Prostate gland (tissue), 2 donors: ENCODE measurements at regions of chr6 and their contacts with region 1.

Region 1: DNA sequence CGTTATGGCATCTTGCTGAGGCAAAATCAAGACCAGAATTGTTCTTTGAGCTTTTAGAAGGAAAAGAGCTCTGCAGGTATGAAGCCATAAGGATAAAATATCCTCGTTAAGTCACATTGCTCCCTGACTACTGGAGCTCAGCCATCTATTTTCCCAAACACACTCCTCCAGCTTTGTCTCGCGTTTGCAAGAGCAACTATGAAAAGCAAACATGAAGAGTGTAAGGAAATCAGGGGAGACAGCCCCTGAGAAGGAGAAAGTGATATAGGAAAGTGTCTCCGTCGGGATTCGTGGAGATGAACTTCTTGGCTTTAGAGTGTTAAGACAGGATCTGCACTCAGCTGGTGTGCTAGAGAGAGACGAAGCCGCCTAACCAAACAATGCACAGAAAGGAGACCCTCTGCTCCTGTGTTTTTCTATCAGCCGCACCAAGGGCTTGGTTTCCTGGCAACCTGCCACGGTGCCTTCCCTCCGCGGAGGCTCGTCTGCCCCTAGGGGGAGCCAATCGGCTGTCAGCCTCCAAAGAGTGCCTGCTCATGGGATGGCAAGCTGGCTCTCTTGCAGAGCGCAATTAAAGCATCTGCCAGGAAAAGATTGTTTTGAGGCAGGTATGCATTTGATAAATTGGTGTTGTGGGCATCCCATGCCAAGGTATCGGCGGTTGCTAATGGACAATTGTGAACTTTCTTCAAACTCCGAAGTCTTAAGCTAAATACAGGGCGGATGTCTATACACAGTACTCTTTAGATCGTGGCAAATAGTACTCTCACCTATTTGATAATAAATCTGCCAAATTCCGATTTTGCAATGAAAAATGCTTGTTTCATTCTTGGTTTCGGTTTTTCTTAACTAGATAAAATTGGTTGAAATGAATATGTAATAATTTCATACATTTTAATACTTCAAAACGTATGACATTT is 603.2 kb downstream of the RNF144B start:
- DNase-seq: peak; percentile 54
- H3K4me3 ChIP-seq: no peak overlapping the region
- H3K27ac ChIP-seq: no peak overlapping the region
- H3K4me1 ChIP-seq: no peaks in the 10 kb centered on the region
- H3K27me3 ChIP-seq: no peaks in the 10 kb centered on the region
- CTCF ChIP-seq: peak in 3 of 4 experiments; percentile 29 to 60 (median 36)
- POLR2A ChIP-seq: no peak

Region 2: DNA sequence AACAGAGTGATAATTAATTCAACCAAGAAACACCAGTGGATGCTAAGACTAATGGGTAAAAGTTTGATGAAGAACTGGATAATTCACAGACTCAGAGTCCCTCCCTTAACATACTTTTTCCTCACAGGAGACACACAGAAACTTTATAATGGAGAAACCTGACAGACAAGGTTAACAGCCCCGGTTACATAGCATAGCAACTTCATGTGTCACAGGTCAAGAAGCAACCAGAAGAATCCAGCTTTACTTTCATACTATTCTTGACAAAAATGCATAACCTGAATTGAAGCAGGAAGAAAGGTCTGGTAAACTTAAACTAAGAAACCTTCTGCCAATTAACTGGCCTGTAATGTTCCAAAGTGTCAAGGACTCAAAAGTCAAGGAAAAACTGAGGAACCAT is 227.2 kb before region 1 on chr6:
- intact Hi-C with region 1: no loop called
- DNase-seq: no peak
- H3K4me3 ChIP-seq: no peak overlapping the region
- H3K27ac ChIP-seq: no peak overlapping the region
- H3K4me1 ChIP-seq: no peaks in the 10 kb centered on the region
- H3K27me3 ChIP-seq: no peaks in the 10 kb centered on the region
- CTCF ChIP-seq: no peak
- POLR2A ChIP-seq: no peak

Region 3: DNA sequence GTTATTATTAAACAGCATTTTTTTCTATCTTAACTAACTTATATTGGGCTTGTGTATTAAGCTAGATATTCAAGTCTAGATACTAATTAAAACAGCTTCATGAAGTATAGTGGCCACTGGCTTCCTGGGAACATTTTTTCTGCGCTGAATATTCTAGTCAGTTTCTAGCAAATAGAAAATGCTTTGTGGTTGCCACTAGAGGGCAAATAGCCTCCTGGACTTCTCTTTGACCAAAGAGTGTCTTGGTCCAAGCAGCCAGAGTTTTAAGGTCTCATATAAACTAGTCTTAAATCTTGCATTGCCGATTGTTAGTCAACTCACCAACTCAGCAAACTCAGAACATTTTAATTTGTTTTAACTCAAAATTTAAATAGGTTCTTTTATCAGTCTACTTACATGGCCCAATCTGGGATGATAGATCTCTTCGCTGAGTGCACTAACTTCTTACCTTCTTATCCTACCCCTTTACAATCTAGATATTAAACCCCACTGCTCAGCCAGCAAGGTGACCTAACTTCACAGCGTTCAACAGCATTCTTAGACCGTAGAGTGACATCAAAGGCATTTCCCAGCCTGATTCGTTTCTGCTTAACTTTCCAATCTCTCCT is 822.3 kb after region 1 on chr6:
- intact Hi-C with region 1: loop called (anchors 10 kb)
- DNase-seq: no peak
- H3K4me3 ChIP-seq: no peak overlapping the region
- H3K27ac ChIP-seq: no peak overlapping the region
- H3K4me1 ChIP-seq: no peaks in the 10 kb centered on the region
- H3K27me3 ChIP-seq: no peaks in the 10 kb centered on the region
- CTCF ChIP-seq: peak in 3 of 4 experiments; percentile 52 to 59 (median 53)
- POLR2A ChIP-seq: no peak

Region 4: GRCh38 chr6:19845266-19846041 is 855.1 kb after region 1 on chr6:
- intact Hi-C with region 1: loop called (anchors 10 kb)
- DNase-seq: no peak
- H3K4me3 ChIP-seq: no peak overlapping the region
- H3K27ac ChIP-seq: no peak overlapping the region
- H3K4me1 ChIP-seq: no peaks in the 10 kb centered on the region
- H3K27me3 ChIP-seq: no peaks in the 10 kb centered on the region
- CTCF ChIP-seq: no peak
- POLR2A ChIP-seq: no peak

Region 5: DNA sequence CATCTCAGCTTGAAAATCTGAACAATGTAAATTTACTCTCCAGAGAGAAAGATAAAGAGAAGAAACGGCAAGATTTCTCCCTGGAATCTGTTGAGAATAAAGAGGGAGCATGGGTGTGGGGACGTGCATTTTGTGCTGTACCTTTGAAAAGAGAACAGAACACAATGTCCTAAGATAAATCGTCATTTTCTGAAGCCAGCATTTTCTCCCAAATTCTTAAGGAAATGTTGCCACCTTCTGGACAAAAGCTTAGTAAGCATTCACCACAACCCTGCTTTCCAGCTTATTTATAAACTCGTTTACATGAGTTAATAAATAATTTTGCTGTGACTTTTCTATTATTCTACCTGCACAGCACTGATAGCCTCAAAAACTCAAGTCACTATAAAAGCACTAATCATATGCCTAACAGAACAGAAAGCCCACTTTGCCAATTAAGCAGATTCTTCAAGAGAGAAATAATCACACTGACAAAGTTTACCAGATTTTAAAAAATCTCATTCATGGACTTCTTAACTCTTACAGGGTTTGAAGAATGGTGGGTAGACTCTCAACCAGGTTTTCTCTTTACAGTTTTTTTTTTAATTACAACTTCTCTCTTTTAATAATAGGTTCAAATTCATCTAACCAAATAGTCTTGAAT is 1066.2 kb after region 1 on chr6:
- intact Hi-C with region 1: loop called (anchors 10 kb)
- DNase-seq: no peak
- H3K4me3 ChIP-seq: no peak overlapping the region
- H3K27ac ChIP-seq: no peak overlapping the region
- H3K4me1 ChIP-seq: no peaks in the 10 kb centered on the region
- H3K27me3 ChIP-seq: no peaks in the 10 kb centered on the region
- CTCF ChIP-seq: peak; percentile 9 to 69 (median 56)
- POLR2A ChIP-seq: no peak